Vagina (tissue), 2 donors: ENCODE measurements at regions of chr4 and their contacts with region 1.

Region 1: DNA sequence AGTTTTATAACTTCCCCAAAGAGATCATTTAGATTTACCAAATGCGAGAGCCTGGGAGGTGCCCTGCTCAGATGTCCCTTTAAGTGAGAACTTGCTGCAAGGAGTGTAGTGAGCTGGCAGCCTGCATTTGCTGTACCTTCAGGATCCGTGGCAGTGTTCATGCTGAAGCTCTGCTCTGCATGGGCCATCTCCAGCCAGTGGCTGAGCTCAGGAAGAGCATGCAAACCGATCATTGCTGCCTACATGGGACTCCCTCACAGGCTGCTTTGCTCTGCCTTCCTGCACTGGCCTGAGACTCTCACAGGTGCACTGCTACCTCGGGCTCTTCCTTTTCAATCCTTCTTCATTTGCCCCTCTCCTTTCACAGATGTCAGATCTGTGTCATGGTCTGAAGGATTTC is 152.0 kb upstream of the SFRP2 start:
- DNase-seq: no peak
- H3K4me3 ChIP-seq: no peak overlapping the region
- H3K27ac ChIP-seq: no peak overlapping the region
- H3K4me1 ChIP-seq: no peaks in the 10 kb centered on the region
- H3K27me3 ChIP-seq: no peaks in the 10 kb centered on the region
- CTCF ChIP-seq: no peak
- POLR2A ChIP-seq: no peak

Region 2: GRCh38 chr4:153962311-153963039 is 21.6 kb after region 1 on chr4:
- intact Hi-C with region 1: loop called (anchors 1 kb)
- DNase-seq: no peak
- H3K4me3 ChIP-seq: no peak overlapping the region
- H3K27ac ChIP-seq: no peak overlapping the region
- H3K4me1 ChIP-seq: no peaks in the 10 kb centered on the region
- H3K27me3 ChIP-seq: no peaks in the 10 kb centered on the region
- CTCF ChIP-seq: no peak
- POLR2A ChIP-seq: no peak